Common myeloid progenitor, CD34-positive (primary cell): ENCODE measurements at regions of chr1 and their contacts with region 1.

Region 1: GRCh38 chr1:37486680-37487618 is 12.6 kb downstream of the ZC3H12A start:
- DNase-seq: peak; percentile 60 to 79 (median 76)
- H3K4me3 ChIP-seq: peak overlapping the region in 4 of 7 experiments; percentile 12 to 25 (median 17)
- H3K27ac ChIP-seq: peak overlapping the region in 1 of 2 experiments; percentile 52
- H3K4me1 ChIP-seq: peaks cover 5 to 25% (median 24%) of the 10 kb centered on the region in 4 experiments
- H3K27me3 ChIP-seq: no peaks in the 10 kb centered on the region

Region 2: DNA sequence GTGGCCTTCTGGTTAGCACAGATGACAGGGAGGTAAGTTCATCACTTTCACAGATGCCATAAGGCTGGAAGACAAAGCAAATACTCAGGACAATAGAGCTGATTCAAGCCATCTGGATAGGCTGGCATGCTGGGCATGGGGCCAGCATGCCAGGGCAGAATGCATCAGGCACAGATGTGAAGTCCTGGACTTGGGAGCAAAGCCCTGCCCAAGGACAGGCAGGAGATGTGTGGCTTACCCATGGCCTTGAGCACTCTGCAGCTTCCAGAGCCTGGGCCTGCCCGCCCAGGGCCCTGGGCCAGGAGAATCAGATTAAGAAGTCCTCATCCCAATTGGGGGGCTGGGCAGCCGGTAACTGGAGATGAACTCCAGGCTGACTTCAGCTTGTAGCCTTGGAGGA is 148.3 kb before region 1 on chr1:
- CTCF ChIA-PET with region 1: no interaction called
- POLR2A ChIA-PET with region 1: no interaction called
- DNase-seq: no peak
- H3K4me3 ChIP-seq: no peak overlapping the region
- H3K27ac ChIP-seq: no peak overlapping the region
- H3K4me1 ChIP-seq: no peaks in the 10 kb centered on the region
- H3K27me3 ChIP-seq: peaks cover 0 to 6% (median 2%) of the 10 kb centered on the region in 5 experiments

Region 3: DNA sequence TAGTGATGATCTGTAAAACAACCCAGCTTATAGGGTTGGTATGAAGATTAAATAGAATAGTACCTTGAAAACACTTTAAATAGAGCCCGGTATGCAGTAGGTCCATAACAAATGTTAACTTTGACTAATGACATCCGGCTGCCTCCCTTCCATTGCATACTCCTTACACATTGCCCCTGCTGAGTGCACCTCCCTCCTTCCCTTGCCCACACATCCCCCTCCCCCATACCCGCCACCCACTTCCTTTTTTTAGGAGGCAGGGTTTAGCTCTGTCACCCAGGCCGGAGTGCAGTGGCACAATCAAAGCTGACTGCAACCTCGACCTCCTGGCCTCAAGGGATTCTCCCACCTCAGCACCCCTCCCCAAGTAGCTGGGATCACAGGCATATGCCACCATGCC is 37.0 kb before region 1 on chr1:
- CTCF ChIA-PET with region 1: interaction called, 243 read pairs
- POLR2A ChIA-PET with region 1: interaction called, 4 read pairs
- DNase-seq: peak; percentile 80 to 92 (median 92)
- H3K4me3 ChIP-seq: peak overlapping the region in 4 of 7 experiments; percentile 13 to 45 (median 18)
- H3K27ac ChIP-seq: no peak overlapping the region
- H3K4me1 ChIP-seq: peaks cover 0 to 21% (median 18%) of the 10 kb centered on the region in 4 experiments
- H3K27me3 ChIP-seq: no peaks in the 10 kb centered on the region

Region 4: DNA sequence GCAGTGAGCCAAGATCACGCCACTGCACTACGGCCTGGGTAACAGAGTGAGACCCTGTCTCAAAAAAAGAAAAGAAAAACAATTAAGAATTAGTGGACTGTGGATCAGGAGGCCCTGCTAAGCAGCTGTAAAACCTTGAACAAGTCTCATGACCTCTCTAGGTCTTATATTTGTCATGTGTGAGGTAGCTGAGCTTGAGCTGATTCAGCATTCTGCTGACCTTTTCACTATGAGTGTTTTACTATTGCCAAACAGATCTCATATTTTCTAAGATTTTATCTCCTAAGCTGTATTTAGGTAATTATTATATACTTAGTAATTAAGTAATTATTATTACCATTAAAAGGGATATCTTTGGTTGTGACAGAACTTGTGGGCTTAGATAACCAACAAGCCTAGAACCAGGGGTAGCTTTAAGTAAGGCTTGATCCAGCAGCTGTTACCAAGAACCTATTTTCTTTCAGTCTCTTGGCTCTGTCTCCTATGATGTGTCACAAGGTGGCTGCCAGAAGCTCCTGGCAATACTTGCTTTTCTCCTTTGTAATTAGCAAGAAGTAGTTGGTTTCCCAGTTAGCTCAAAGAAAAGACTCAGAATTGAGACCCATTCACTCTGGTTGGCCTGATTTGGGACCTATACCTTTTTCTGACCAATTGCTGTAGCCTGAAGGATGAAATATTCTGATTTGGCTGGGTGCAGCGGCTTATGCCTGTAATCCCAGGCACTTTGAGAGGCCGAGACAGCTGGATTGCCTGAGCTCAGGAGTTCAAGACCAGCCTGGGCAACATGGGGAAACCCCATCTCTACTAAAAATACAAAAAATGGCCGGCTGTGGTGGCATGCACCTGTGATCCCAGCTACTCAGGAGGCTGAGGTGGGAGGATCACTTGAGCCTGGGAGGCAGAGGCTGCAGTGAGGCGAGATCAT is 21.1 kb before region 1 on chr1:
- CTCF ChIA-PET with region 1: interaction called, 243 read pairs
- POLR2A ChIA-PET with region 1: no interaction called
- DNase-seq: no peak
- H3K4me3 ChIP-seq: no peak overlapping the region
- H3K27ac ChIP-seq: no peak overlapping the region
- H3K4me1 ChIP-seq: no peaks in the 10 kb centered on the region
- H3K27me3 ChIP-seq: no peaks in the 10 kb centered on the region

Region 5: DNA sequence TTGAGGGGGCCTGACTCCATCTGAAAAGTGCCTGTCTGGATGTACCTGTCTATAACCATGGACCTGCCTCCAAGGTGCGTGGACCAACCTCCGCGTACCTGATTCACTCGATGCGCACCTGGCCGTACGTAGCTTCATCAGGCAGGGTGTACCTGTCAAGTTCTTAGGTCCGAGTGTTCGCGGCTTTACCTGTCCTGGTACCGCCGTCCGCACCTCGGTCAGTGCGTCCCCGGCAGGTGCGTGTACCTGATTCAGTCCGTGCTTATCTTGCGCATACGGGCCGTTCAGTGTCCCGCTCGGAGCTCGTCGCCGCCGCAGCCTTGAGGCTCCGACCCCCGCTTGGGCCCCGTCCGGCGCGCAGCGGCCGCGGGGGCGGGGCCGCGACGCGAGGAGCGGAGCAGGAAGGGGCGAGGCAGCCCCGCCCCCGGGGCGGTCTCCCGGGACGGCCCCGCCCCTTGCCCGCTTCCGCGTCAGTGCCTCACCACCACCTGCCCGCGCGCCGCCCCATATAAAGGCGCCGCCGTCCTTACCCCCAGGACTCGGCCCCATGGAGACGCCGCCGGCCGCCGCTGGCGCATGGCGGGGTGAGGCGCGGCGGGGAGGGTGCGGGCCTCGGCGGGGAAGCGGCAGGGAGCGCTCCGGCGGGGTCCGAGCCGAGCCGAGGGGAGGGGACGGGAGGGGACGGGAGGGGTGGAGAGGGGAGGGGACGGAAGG is 12.7 kb before region 1 on chr1 and contains the start of gene ZC3H12A:
- CTCF ChIA-PET with region 1: interaction called, 110 read pairs
- POLR2A ChIA-PET with region 1: interaction called, 26 read pairs
- DNase-seq: peak; percentile 89 to 93 (median 93)
- H3K4me3 ChIP-seq: peak within 1 kb of the TSS; percentile 52 to 92 (median 84)
- H3K27ac ChIP-seq: peak within 1 kb of the TSS; percentile 75 to 90
- H3K4me1 ChIP-seq: peaks cover 9 to 78% (median 76%) of the 10 kb centered on the region in 4 experiments
- H3K27me3 ChIP-seq: no peaks in the 10 kb centered on the region

Region 6: GRCh38 chr1:37498872-37499617 is 12.1 kb after region 1 on chr1:
- CTCF ChIA-PET with region 1: interaction called, 10 read pairs
- POLR2A ChIA-PET with region 1: no interaction called
- DNase-seq: no peak
- H3K4me3 ChIP-seq: no peak overlapping the region
- H3K27ac ChIP-seq: peak overlapping the region in 1 of 2 experiments; percentile 12
- H3K4me1 ChIP-seq: no peaks in the 10 kb centered on the region
- H3K27me3 ChIP-seq: no peaks in the 10 kb centered on the region